ENCODE measurements at regions of chr1 and their contacts with region 1.

Region 1: GRCh38 chr1:160261893-160262794 is at the start of gene DCAF8:
- DNase-seq: peak; percentile 99
- H3K4me3 Mint-ChIP-seq: peak within 1 kb of the TSS; percentile 96
- H3K27ac Mint-ChIP-seq: peak within 1 kb of the TSS; percentile 99
- H3K4me1 Mint-ChIP-seq: peaks cover 45% of the 10 kb centered on the region
- H3K27me3 Mint-ChIP-seq: no peaks in the 10 kb centered on the region
- total RNA-seq, gene DCAF8: 142 to 150 TPM

Region 2: GRCh38 chr1:160193091-160193819 is 68.9 kb before region 1 on chr1:
- CTCF ChIA-PET with region 1: interaction called, 4 read pairs
- POLR2A ChIA-PET with region 1: no interaction called
- intact Hi-C with region 1: loop called (anchors 2 kb)
- DNase-seq: peak; percentile 86
- H3K4me3 Mint-ChIP-seq: no peak overlapping the region
- H3K27ac Mint-ChIP-seq: no peak overlapping the region
- H3K4me1 Mint-ChIP-seq: no peaks in the 10 kb centered on the region
- H3K27me3 Mint-ChIP-seq: no peaks in the 10 kb centered on the region

Region 3: DNA sequence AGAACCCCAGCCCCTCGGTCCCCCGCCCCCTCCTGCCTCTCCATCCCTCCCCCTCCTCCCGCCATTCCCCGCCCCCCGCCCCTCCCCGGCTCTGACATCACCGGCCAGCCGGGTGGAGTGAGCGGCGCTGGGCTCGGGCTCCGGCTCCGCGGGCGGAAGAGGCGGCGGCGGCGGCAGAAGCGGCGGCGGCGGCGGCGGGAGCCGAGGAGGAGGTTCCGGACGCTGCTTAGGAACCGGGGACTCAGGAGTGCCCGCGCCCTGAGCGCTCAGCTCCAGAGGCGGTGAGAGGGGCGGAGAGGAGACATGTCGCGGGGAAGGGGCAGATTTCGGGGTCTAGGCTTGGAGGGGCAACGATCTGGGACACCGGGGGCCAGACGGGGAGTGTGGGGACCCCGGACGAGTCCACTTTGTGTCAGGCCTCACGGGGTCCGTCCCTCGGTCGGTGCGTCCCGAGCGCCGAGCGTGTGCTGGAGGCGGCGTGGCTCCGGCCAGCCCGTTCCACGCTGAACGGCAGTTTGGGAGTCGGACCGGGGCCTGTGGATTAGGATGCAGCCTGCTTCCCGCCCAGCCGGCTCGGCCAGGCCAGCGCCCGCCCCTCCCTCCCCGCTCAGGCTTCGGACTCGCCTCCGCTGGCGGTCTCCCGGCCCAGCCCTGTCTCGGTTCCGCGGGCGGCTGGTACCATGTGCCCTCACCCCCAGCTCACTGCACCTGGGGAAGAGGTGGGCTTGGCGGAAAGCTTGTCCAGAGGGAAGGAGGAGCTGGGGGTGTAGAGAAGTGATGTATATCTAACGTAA is 56.7 kb before region 1 on chr1 and contains the start of gene PEA15:
- CTCF ChIA-PET with region 1: no interaction called
- POLR2A ChIA-PET with region 1: interaction called, 3 read pairs
- intact Hi-C with region 1: loop called (anchors 2 kb)
- DNase-seq: peak; percentile 80
- H3K4me3 Mint-ChIP-seq: peak within 1 kb of the TSS; percentile 87
- H3K27ac Mint-ChIP-seq: peak within 1 kb of the TSS; percentile 82
- H3K4me1 Mint-ChIP-seq: peaks cover 54% of the 10 kb centered on the region
- H3K27me3 Mint-ChIP-seq: no peaks in the 10 kb centered on the region
- total RNA-seq, gene PEA15: 51.8 to 51.9 TPM

Region 4: DNA sequence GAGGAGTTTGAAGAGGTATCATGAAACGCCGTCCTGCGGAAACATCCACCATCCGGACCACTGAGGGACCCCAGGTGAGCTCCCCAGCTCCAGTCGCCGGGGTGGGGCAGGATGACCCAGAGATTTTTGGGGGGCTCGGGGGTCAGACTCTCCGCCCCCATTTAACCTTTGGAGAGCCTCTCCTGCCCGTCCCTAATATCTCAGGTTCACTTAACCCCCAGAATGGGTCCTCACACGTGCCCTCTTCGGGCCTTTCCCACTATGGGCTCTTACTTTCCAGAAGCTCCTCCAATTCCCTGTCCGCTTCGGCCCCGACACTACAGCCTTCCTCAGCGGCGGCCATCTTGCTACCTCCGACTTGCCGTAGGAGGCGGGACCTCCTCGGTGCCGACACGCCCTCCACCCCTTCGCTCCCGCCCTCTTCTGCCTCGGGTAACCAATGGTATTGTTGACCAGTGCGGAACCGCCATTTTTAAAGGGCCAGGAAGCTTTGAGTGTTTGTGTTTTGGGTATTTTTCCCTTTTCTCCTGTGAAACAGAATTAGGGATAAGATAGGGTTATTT is 22.7 kb after region 1 on chr1 and contains the start of gene PEX19:
- CTCF ChIA-PET with region 1: interaction called, 60 read pairs
- POLR2A ChIA-PET with region 1: interaction called, 25 read pairs
- intact Hi-C with region 1: loop called (anchors 1 kb)
- DNase-seq: peak; percentile 97
- H3K4me3 Mint-ChIP-seq: peak within 1 kb of the TSS; percentile 96
- H3K27ac Mint-ChIP-seq: peak within 1 kb of the TSS; percentile 90
- H3K4me1 Mint-ChIP-seq: peaks cover 20% of the 10 kb centered on the region
- H3K27me3 Mint-ChIP-seq: no peaks in the 10 kb centered on the region
- total RNA-seq, gene PEX19: 50.0 to 61.1 TPM

Region 5: DNA sequence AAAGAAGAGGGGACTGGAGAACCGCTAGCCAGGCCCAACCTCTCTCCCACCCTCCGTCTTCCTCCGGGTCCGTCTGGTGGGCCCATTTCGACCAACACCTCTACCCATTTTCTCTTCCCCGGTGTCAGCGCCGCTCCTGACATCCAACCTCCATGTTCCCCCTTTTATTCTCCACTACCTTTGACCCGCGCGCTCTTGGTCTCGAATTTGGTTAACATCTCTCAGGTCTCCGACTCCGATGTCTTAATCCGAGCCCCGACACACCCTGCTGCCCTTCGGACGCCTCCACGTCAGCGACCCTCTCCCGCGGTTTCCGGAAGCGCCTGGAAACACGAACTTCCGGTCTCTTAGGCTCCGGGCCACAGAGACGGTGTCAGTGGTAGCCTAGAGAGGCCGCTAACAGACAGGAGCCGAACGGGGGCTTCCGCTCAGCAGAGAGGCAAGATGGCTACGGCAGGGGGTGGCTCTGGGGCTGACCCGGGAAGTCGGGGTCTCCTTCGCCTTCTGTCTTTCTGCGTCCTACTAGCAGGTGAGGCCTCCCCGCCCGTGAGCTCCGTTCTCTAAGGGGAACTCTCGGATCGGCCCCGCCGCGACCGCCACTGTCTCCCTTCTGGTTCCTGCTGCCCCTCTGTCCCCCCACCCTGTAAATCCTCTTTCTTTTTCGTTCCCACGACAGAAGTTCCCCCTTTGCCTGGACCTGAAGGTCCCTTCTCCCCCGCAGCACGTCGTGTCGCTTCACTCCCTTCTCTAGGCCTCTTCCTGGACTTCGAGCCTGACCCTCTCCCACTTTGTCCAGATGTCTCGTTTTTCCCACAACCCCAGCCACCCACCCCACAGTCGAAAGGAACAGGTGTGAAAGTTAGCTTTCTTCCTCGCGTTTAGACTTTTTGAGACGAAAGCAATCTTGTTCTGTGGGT is 81.1 kb after region 1 on chr1 and contains the starts of genes COPA and NCSTN:
- CTCF ChIA-PET with region 1: no interaction called
- POLR2A ChIA-PET with region 1: no interaction called
- intact Hi-C with region 1: loop called (anchors 1 kb)
- DNase-seq: peak; percentile 95
- H3K4me3 Mint-ChIP-seq: peak within 1 kb of the TSS; percentile 93
- H3K27ac Mint-ChIP-seq: peak within 1 kb of the TSS; percentile 93
- H3K4me1 Mint-ChIP-seq: peaks cover 41% of the 10 kb centered on the region
- H3K27me3 Mint-ChIP-seq: no peaks in the 10 kb centered on the region
- total RNA-seq, gene COPA: 132 TPM
- total RNA-seq, gene NCSTN: 39.8 to 42.6 TPM